ENCODE measurements at regions of chr22 and their contacts with region 1.

Region 1: GRCh38 chr22:35930933-35931332 is 97.7 kb downstream of the RBFOX2 start:
- DNase-seq: peak; percentile 59
- H3K4me3 ChIP-seq: no peak overlapping the region
- H3K27ac ChIP-seq: no peak overlapping the region; a peak in 1 of 4 replicates
- H3K4me1 ChIP-seq: no peaks in the 10 kb centered on the region; a peak in 1 of 4 replicates
- H3K27me3 ChIP-seq: no peaks in the 10 kb centered on the region
- CTCF ChIP-seq: peak; percentile 81
- EP300 ChIP-seq: no peak
- RAD21 ChIP-seq: peak; percentile 96

Region 2: GRCh38 chr22:35900483-35901168 is 30.3 kb before region 1 on chr22:
- CTCF ChIA-PET with region 1: no interaction called
- POLR2A ChIA-PET with region 1: no interaction called
- DNase-seq: no peak
- H3K4me3 ChIP-seq: no peak overlapping the region
- H3K27ac ChIP-seq: peak overlapping the region; percentile 29 to 79
- H3K4me1 ChIP-seq: peaks cover 20 to 35% of the 10 kb centered on the region in 2 experiments
- H3K27me3 ChIP-seq: no peaks in the 10 kb centered on the region
- CTCF ChIP-seq: no peak
- EP300 ChIP-seq: no peak
- RAD21 ChIP-seq: no peak

Region 3: DNA sequence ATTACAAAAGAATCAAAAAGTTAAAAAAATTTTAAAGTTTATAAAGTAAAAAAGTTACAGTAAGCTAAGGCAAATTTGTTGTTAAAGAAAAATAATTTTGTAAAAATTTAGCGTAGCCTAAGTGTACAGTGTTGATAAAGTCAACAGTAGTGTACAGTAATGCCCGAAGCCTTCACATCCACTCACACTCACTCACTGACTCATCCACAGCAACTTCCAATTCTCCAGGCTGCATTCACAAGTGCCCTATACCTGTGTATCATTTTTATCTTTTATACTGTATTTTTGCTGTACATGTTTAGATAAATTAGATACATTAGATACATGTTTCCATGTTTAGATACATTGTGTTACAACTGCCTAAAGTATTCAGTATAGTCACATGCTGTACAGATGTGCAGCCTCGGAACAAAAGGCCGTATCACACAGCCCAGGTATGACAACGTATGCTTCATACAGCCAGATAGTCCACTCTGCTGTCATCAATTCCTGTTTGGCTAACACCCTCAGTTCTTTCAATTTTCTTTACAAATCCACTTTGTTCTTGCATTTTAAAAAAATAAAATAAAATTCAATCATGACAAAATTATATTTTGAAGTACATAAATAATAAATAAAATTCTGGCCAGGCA is 17.0 kb after region 1 on chr22:
- CTCF ChIA-PET with region 1: interaction called, 11 read pairs
- POLR2A ChIA-PET with region 1: no interaction called
- DNase-seq: no peak
- H3K4me3 ChIP-seq: no peak overlapping the region
- H3K27ac ChIP-seq: peak overlapping the region in 1 of 2 experiments; percentile 41; a peak in 1 of 4 replicates
- H3K4me1 ChIP-seq: peaks cover 6 to 13% of the 10 kb centered on the region in 2 experiments; a peak in 3 of 4 replicates
- H3K27me3 ChIP-seq: no peaks in the 10 kb centered on the region
- CTCF ChIP-seq: no peak
- EP300 ChIP-seq: no peak
- RAD21 ChIP-seq: no peak

Region 4: GRCh38 chr22:35971456-35972119 is 40.7 kb after region 1 on chr22:
- CTCF ChIA-PET with region 1: interaction called, 39 read pairs
- POLR2A ChIA-PET with region 1: no interaction called
- DNase-seq: peak; percentile 65
- H3K4me3 ChIP-seq: peak overlapping the region; percentile 19 to 45; a peak in 3 of 4 replicates
- H3K27ac ChIP-seq: peak overlapping the region; percentile 96 to 100
- H3K4me1 ChIP-seq: peaks cover 66 to 94% of the 10 kb centered on the region in 2 experiments
- H3K27me3 ChIP-seq: no peaks in the 10 kb centered on the region
- CTCF ChIP-seq: no peak
- EP300 ChIP-seq: peak; percentile 92
- RAD21 ChIP-seq: peak; percentile 38; the same call in 1 of the 2 replicates

Region 5: GRCh38 chr22:36017651-36018091 is 86.7 kb after region 1 on chr22:
- CTCF ChIA-PET with region 1: interaction called, 49 read pairs
- POLR2A ChIA-PET with region 1: no interaction called
- DNase-seq: peak; percentile 68
- H3K4me3 ChIP-seq: no peak overlapping the region
- H3K27ac ChIP-seq: peak overlapping the region; percentile 70 to 95; a peak in 3 of 4 replicates
- H3K4me1 ChIP-seq: peaks cover 47 to 54% of the 10 kb centered on the region in 2 experiments
- H3K27me3 ChIP-seq: no peaks in the 10 kb centered on the region
- CTCF ChIP-seq: no peak
- EP300 ChIP-seq: peak; percentile 13 to 97; a peak in 2 of 4 replicates
- RAD21 ChIP-seq: 0 out of 2 replicates have a peak, but pooled peaks have one; percentile 25

Region 6: DNA sequence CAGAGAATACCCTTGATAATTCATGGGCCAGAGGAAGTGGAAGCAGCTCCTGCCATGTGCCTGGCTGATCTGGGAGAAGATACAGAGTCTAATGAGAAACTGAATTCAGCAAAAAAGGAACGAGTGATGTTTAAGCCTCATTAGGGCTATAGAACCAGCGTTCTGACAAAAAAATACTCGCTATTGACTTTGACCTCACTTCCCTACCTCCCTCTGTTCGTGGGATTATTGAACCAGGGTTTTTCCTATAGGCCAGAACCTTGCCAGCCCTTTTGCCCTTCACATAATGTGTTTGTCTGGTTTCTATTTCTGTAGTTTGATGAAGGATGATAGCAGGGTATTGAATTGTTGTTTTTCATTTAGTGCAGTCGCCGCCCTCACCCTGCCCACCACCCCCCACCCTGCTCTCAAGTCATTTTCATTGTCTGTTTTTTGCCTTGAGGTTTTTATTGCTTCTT is 105.3 kb after region 1 on chr22:
- CTCF ChIA-PET with region 1: interaction called, 14 read pairs
- POLR2A ChIA-PET with region 1: interaction called, 3 read pairs
- DNase-seq: peak; percentile 69
- H3K4me3 ChIP-seq: no peak overlapping the region
- H3K27ac ChIP-seq: peak overlapping the region; percentile 37 to 98; a peak in 3 of 4 replicates
- H3K4me1 ChIP-seq: peaks cover 8 to 26% of the 10 kb centered on the region in 2 experiments; a peak in 3 of 4 replicates
- H3K27me3 ChIP-seq: no peaks in the 10 kb centered on the region
- CTCF ChIP-seq: no peak
- EP300 ChIP-seq: peak in 1 of 2 experiments; percentile 86; a peak in 2 of 4 replicates
- RAD21 ChIP-seq: peak; percentile 37